ENCODE measurements at regions of chr17 and their contacts with region 1.

Region 1: DNA sequence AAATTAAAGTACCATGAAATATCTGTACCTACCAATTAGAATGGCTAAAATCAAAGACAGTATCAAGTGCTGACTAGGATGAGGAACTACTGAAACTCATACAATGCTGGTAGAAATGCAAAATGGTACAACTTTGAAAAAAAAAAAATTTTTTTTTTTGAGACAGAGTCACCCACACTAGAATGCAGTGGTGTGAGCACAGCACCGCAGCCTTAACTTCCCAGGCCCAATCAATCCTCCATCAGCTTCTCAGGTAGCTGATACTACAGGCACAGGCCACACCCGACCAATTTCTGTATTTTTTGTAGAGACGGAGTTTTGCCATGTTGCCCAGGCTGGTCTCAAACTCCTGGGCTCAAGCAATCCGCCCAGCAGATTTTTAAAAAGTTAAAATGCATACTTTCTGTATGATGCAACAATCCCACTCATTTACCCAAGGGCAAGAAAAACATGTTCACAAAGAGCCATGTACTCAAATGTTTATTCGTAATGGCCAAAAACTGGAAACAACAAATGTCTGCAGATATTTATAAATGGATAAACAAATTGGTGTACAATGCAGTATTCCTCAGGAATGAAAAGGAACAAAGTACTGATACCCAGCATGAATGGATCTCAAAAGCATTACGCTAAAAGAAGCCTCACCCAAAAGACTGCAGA is 8.7 kb downstream of the SMURF2 start:
- DNase-seq: no peak
- H3K4me3 Mint-ChIP-seq: no peak overlapping the region
- H3K27ac Mint-ChIP-seq: no peak overlapping the region
- H3K4me1 Mint-ChIP-seq: peaks cover 9% of the 10 kb centered on the region
- H3K27me3 Mint-ChIP-seq: no peaks in the 10 kb centered on the region

Region 2: DNA sequence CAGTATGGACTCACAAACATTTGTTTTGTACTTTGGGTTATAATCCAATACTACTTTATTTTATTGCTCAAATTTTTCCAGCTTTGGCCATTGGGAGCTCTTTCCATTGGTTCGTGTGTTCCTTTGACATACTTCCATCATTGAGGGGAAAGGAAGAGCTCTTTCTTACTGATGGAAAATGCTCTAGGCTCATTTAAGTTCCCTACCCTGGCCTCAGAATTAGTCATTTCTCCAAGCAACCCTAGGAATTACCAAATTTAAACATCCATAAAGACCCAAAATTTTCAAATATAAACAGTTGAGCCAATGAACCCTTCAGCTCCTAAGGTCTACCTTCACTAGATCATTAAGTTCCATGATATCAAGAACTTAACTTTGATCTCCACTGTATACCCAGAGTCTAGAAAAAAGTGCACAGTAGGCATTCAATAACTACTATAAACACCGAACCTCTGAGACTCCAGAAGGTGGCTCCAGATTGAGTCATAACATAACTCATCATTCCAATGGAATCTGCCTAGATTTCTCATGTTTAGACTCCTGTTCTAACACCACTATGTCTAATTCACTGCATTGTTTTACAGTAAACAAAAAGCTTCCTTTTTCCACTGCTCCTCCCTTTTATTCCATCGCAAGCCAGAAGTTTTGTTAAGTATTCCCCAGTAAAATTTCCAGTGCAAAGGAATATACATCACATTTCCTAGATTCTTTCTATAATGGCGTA is 30.4 kb before region 1 on chr17:
- CTCF ChIA-PET with region 1: no interaction called
- DNase-seq: no peak
- H3K4me3 Mint-ChIP-seq: no peak overlapping the region
- H3K27ac Mint-ChIP-seq: no peak overlapping the region
- H3K4me1 Mint-ChIP-seq: peaks cover 7% of the 10 kb centered on the region
- H3K27me3 Mint-ChIP-seq: no peaks in the 10 kb centered on the region

Region 3: GRCh38 chr17:64736804-64737492 is 83.5 kb after region 1 on chr17:
- CTCF ChIA-PET with region 1: interaction called, 10 read pairs
- DNase-seq: peak; percentile 75
- H3K4me3 Mint-ChIP-seq: no peak overlapping the region
- H3K27ac Mint-ChIP-seq: no peak overlapping the region
- H3K4me1 Mint-ChIP-seq: peaks cover 18% of the 10 kb centered on the region
- H3K27me3 Mint-ChIP-seq: peaks cover 4% of the 10 kb centered on the region